SK-N-SH (cell line): ENCODE measurements at regions of chr22 and their contacts with region 1.

Region 1: GRCh38 chr22:35582861-35583670 is 34.1 kb downstream of the MB start:
- DNase-seq: peak; percentile 88
- H3K4me3 ChIP-seq: no peak overlapping the region; a peak in 1 of 4 replicates
- H3K27ac ChIP-seq: no peak overlapping the region
- H3K4me1 ChIP-seq: peaks cover 0 to 23% of the 10 kb centered on the region in 2 experiments; a peak in 1 of 4 replicates
- H3K27me3 ChIP-seq: no peaks in the 10 kb centered on the region
- CTCF ChIP-seq: peak; percentile 94
- EP300 ChIP-seq: no peak
- RAD21 ChIP-seq: peak; percentile 95

Region 2: DNA sequence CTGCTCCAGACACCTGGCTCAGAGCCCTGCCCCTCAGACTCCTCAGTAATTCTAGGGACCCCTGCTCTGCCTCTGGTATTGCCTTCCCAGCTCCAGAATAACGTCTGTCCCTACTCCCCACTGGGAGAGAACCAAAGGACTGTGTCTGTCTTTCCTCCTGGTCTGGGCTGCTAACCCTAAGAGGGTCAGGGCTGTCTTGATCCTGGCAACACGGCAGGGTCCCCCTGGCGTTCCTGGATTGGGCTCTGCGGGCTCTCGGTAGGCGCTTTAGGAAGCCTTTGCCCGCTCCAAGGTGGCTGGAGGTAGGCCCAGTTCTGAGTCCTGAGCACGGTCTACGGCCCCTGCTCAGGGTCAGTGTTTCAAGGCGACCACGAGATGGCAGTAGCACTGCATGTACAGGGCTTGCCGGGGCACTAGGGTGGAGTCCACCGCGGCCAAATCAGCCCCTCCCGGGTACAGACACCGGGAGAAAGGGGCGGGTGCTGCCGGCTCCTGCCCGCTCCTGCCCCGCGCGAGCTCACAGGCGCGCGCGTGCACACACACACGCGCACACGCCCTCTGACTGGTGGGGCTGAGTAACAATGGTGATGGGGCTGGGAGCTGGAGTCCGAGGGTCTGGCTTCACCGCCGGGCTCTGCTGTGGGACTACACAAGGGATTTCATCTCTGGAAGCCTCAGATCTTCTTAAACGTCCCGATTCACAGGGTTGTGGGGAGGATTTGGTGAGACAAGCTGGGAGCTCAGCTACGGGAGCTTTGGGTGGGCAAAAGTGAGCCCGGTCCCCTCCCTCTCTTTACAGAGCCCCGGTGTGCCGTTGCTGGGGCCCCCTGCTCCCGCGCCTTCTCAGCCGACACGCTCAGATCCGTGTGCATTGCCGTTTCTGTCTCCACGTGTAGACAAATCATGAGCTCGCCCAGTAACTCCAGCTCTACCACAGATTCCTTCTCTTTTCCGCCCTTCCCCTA is 232.2 kb before region 1 on chr22:
- CTCF ChIA-PET with region 1: interaction called, 42 read pairs
- POLR2A ChIA-PET with region 1: no interaction called
- DNase-seq: peak; percentile 97
- H3K4me3 ChIP-seq: peak overlapping the region; percentile 52 to 63
- H3K27ac ChIP-seq: peak overlapping the region; percentile 29 to 72; a peak in 3 of 4 replicates
- H3K4me1 ChIP-seq: peaks cover 5 to 24% of the 10 kb centered on the region in 2 experiments; a peak in 2 of 4 replicates
- H3K27me3 ChIP-seq: no peaks in the 10 kb centered on the region
- CTCF ChIP-seq: peak; percentile 73
- EP300 ChIP-seq: no peak
- RAD21 ChIP-seq: peak; percentile 95

Region 3: DNA sequence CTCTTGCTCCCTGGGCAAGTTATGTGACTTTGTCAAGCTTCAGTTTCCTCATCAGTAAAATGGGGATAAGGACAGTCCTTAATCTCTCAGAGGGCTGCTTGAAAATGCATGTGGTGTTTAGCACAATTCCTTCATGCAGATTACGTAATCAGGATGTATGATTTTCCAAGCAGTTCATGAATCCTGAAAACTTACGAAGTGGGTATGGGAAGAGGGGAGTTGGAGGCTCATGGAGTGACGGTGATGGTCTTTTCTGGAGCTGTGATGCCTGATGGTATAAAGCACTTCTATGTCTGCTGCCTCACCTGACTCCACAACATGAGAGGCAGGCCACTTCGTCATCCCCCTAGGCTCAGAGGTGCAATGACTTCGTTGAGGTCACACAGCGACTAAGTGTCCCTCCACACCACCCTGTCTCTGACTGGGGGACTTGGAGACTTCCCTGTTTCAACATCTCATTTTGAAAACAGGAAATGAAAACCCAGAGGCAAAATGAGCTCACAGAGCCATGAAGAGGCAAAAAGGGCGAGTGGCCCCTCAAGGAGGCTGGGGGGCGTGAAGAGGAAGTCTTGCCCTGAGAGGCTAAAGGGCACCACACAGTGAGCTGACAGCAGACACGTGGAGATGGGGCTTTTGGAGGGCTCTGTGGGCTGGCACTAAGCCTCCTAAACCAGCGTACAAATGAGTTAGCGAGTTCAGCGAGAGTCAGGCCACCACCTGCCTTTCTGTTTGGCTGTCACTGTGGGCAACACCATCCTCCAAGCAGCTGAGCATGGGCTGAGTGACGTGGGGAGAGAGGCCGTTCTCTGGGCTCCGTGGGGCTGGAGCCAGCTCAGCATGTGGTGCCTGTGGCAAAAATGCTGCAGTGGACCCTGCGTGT is 173.0 kb before region 1 on chr22:
- CTCF ChIA-PET with region 1: interaction called, 16 read pairs
- POLR2A ChIA-PET with region 1: no interaction called
- DNase-seq: no peak
- H3K4me3 ChIP-seq: no peak overlapping the region
- H3K27ac ChIP-seq: no peak overlapping the region
- H3K4me1 ChIP-seq: no peaks in the 10 kb centered on the region
- H3K27me3 ChIP-seq: no peaks in the 10 kb centered on the region
- CTCF ChIP-seq: no peak
- EP300 ChIP-seq: no peak
- RAD21 ChIP-seq: no peak

Region 4: GRCh38 chr22:35568751-35569725 is 14.0 kb before region 1 on chr22:
- CTCF ChIA-PET with region 1: interaction called, 31 read pairs
- POLR2A ChIA-PET with region 1: no interaction called
- DNase-seq: no peak
- H3K4me3 ChIP-seq: no peak overlapping the region
- H3K27ac ChIP-seq: peak overlapping the region in 1 of 2 experiments; percentile 52; a peak in 2 of 4 replicates
- H3K4me1 ChIP-seq: peaks cover 9 to 25% of the 10 kb centered on the region in 2 experiments; a peak in 3 of 4 replicates
- H3K27me3 ChIP-seq: no peaks in the 10 kb centered on the region
- CTCF ChIP-seq: no peak
- EP300 ChIP-seq: no peak
- RAD21 ChIP-seq: no peak

Region 5: DNA sequence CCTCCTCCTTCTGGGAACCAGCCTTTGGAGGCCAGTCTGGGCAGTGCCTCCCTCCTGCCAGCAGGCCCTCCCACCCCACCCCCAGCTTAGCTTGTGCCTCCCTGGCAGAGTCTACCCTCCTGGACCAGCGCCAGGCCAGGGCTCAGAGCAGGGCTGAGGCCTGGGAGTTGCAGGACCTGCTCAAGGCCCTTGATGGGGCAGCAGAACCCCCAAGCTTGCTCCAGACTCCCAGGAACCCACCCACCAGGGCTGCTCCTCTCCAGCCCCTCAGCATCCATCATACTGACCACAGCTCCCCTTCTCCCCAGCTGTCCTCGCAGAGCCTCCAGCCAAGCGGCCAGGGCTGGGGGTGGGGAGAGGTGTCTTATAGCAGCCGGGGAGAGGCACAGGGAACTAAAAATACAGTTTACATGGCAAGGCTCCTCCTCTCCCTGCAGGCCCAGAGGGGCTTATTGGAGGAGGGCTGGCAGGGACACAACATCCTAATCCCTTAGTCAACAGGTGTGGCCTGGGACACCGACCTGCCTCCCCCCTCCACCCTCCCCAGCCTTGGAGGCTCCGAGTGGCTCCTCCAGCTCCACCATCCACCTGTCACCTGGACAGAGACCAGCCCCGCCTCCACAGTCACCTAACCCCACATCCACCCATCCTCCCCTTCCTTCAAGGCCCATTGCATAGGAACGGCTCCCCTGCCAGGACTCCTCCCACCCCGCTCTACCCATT is 39.3 kb after region 1 on chr22:
- CTCF ChIA-PET with region 1: interaction called, 13 read pairs
- POLR2A ChIA-PET with region 1: no interaction called
- DNase-seq: peak; percentile 67
- H3K4me3 ChIP-seq: no peak overlapping the region
- H3K27ac ChIP-seq: peak overlapping the region in 1 of 2 experiments; percentile 81; a peak in 2 of 4 replicates
- H3K4me1 ChIP-seq: peaks cover 0 to 41% of the 10 kb centered on the region in 2 experiments; a peak in 2 of 4 replicates
- H3K27me3 ChIP-seq: no peaks in the 10 kb centered on the region
- CTCF ChIP-seq: no peak
- EP300 ChIP-seq: no peak
- RAD21 ChIP-seq: no peak

Region 6: GRCh38 chr22:35883031-35883620 is 300.1 kb after region 1 on chr22:
- CTCF ChIA-PET with region 1: no interaction called
- POLR2A ChIA-PET with region 1: no interaction called
- DNase-seq: no peak
- H3K4me3 ChIP-seq: no peak overlapping the region
- H3K27ac ChIP-seq: peak overlapping the region; percentile 57 to 81
- H3K4me1 ChIP-seq: peaks cover 20 to 21% of the 10 kb centered on the region in 2 experiments
- H3K27me3 ChIP-seq: no peaks in the 10 kb centered on the region
- CTCF ChIP-seq: no peak
- EP300 ChIP-seq: no peak
- RAD21 ChIP-seq: no peak